Activated B cell treated with CpG ODN at 0.5 μM for 24 hours (primary cell): ENCODE measurements at regions of chr20 and their contacts with region 1.

Region 1: DNA sequence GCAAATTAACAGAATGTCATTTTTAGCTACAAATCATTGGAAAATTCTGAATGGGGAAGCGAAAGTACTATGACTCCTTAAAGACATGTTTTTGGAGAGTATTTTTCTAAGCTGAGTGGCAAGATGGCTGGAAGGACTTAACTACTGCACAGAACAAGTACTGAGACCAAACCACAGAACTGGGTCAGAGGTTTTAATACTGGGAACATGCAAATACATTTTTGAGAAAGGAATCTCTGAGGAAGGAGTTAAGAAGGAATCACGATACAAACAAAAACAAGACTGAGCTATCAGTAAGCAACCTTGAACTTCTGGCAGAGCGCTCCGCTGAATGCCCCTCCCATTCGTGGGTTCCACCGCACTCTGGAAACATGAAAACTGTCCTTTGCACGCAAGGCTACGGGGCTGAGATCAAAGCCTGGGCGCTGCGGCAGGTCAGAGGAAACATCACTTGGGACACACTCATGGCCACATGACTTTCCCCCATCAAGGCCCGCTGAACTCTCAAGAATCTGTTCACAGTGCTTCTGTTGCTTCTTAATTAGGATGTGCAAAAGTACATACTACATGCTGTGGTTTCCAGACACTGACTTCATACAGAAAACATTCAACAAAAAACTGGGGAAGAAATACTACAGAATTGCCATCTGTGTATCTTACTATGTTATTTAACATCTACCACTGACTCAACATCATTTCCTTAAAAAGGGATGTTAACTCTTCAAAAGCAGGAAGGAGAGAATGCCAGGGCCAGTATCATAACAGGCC is 27.8 kb downstream of the SLC23A2 start:
- DNase-seq: peak; percentile 59
- ATAC-seq: peak; percentile 78
- H3K4me3 Mint-ChIP-seq: peak overlapping the region; percentile 81
- H3K27ac Mint-ChIP-seq: peak overlapping the region; percentile 96
- H3K4me1 Mint-ChIP-seq: peaks cover 67% of the 10 kb centered on the region
- H3K27me3 Mint-ChIP-seq: no peaks in the 10 kb centered on the region
- CTCF ChIP-seq: no peak

Region 2: GRCh38 chr20:4820806-4821518 is 152.6 kb before region 1 on chr20:
- CTCF ChIA-PET with region 1: no interaction called
- POLR2A ChIA-PET with region 1: interaction called, 10 read pairs
- intact Hi-C with region 1: no loop called
- DNase-seq: no peak
- ATAC-seq: no peak
- H3K4me3 Mint-ChIP-seq: peak overlapping the region; percentile 98
- H3K27ac Mint-ChIP-seq: peak overlapping the region; percentile 98
- H3K4me1 Mint-ChIP-seq: peaks cover 69% of the 10 kb centered on the region
- H3K27me3 Mint-ChIP-seq: no peaks in the 10 kb centered on the region
- CTCF ChIP-seq: no peak

Region 3: DNA sequence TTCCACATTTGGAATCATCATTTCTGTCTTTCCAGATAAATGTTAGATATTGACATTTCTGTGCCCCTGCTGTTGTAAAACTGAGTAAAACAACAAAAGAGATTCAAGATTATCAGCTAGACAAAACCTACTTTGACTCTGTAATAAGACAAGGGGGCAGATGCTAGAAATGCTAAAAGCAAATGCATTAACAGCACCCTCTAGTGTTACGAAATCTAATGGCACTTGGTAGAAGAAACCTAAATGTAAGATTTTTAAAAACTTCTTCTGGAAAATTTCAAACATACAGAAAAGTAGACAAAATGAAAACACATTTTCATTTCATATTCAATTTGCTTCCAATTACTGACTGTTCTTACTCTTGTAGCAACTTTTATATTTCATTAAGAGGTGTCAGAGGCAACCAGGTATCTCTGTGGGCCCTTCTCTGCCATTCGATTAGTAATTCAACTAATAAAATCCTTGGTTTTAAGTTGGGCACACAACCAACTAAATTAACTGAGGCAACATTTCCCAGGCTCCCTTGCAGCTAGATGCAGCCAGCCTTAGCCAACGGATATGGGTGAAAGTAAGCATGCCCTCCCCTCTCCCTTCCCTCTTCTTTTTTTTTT is 17.2 kb before region 1 on chr20:
- CTCF ChIA-PET with region 1: interaction called, 3 read pairs
- POLR2A ChIA-PET with region 1: interaction called, 21 read pairs
- intact Hi-C with region 1: loop called (anchors 1 kb)
- DNase-seq: no peak
- ATAC-seq: no peak
- H3K4me3 Mint-ChIP-seq: no peak overlapping the region
- H3K27ac Mint-ChIP-seq: peak overlapping the region; percentile 18
- H3K4me1 Mint-ChIP-seq: peaks cover 34% of the 10 kb centered on the region
- H3K27me3 Mint-ChIP-seq: no peaks in the 10 kb centered on the region
- CTCF ChIP-seq: peak; percentile 19

Region 4: GRCh38 chr20:4985658-4986057 is 12.1 kb after region 1 on chr20:
- CTCF ChIA-PET with region 1: interaction called, 8 read pairs
- POLR2A ChIA-PET with region 1: interaction called, 60 read pairs
- intact Hi-C with region 1: loop called (anchors 1 kb)
- DNase-seq: no peak
- ATAC-seq: peak; percentile 59
- H3K4me3 Mint-ChIP-seq: peak overlapping the region; percentile 66
- H3K27ac Mint-ChIP-seq: peak overlapping the region; percentile 92
- H3K4me1 Mint-ChIP-seq: peaks cover 92% of the 10 kb centered on the region
- H3K27me3 Mint-ChIP-seq: no peaks in the 10 kb centered on the region
- CTCF ChIP-seq: no peak

Region 5: DNA sequence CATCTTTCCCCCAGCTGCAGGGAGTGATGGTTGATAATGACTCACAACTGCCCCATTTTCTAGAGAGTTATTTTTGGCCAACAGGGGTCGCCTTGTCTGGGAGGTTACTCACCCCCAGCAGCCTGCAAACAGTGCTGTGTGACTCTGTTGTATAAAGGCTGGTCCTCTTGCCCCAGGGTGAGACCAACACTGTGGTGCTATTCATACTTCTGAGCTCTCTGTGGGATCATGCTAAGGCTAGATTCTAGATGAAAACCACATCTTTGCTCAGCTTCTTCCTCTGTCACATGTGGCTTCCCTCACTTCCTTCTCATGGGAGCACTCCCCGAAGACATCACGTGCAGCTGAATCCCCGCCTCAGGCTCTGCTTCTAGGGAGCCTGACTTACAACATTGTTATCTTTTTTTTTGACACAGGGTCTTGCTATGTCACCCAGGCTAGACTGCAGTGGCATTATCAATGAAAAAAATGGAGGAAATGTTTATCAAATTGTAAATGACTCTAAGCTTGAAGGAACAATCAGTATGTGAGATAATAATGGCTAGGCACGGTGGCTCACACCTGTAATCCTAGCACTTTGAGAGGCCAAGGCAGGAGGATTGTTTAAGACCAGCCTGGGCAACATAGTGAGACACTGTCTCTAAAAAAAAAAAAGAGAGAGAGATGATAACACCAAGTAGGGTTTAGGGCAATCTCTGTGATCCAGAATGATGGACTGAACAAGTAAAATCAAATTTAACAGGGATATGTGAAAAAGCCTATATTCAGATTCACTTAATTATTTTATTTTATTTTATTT is 83.5 kb after region 1 on chr20:
- CTCF ChIA-PET with region 1: interaction called, 3 read pairs
- POLR2A ChIA-PET with region 1: interaction called, 3 read pairs
- intact Hi-C with region 1: loop called (anchors 5 kb)
- DNase-seq: peak; percentile 20
- ATAC-seq: peak; percentile 92
- H3K4me3 Mint-ChIP-seq: no peak overlapping the region
- H3K27ac Mint-ChIP-seq: peak overlapping the region; percentile 73
- H3K4me1 Mint-ChIP-seq: peaks cover 16% of the 10 kb centered on the region
- H3K27me3 Mint-ChIP-seq: no peaks in the 10 kb centered on the region
- CTCF ChIP-seq: no peak

Region 6: DNA sequence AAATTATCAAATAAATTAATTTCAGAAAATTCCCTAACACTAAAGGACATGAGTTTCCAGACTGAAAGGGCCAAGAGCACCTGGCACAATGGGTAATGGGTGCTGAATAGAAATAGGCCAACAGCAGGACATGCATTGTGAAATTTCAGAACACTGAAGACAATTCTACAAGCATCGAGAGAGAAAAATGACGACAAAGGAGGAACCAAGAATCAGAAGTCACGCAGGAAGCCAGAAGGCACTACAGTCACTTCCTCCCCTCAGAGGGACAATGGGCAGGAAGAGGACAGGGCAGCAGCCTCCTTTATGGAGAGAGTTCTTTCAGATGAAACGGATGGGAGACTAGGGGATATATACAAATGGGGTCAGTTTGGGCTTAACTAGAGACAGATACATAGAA is 116.7 kb after region 1 on chr20:
- CTCF ChIA-PET with region 1: no interaction called
- POLR2A ChIA-PET with region 1: no interaction called
- intact Hi-C with region 1: loop called (anchors 5 kb)
- DNase-seq: no peak
- ATAC-seq: peak; percentile 83
- H3K4me3 Mint-ChIP-seq: peak overlapping the region; percentile 42
- H3K27ac Mint-ChIP-seq: peak overlapping the region; percentile 85
- H3K4me1 Mint-ChIP-seq: peaks cover 38% of the 10 kb centered on the region
- H3K27me3 Mint-ChIP-seq: no peaks in the 10 kb centered on the region
- CTCF ChIP-seq: no peak

Region 7: DNA sequence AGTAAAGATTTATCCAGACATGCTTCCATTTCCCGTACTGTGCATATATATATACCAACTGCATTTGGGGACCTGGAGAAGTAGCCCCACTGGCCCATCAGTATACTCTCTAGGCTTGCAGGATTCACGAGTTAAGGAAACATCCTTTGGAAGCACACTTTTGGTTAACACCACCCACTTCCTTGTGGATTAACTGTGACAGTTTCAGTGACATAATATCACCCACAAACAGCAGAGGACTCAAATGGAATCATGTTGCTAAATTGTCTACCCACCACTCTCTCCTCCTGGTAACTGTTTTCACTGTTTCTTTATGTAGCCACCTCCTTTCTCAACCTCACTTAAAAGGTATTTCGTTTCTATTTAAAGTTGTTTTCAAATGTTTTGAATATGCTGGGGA is 288.2 kb after region 1 on chr20:
- CTCF ChIA-PET with region 1: no interaction called
- POLR2A ChIA-PET with region 1: no interaction called
- intact Hi-C with region 1: no loop called
- DNase-seq: no peak
- ATAC-seq: no peak
- H3K4me3 Mint-ChIP-seq: no peak overlapping the region
- H3K27ac Mint-ChIP-seq: no peak overlapping the region
- H3K4me1 Mint-ChIP-seq: no peaks in the 10 kb centered on the region
- H3K27me3 Mint-ChIP-seq: peaks cover 12% of the 10 kb centered on the region
- CTCF ChIP-seq: no peak